Dorsolateral prefrontal cortex (tissue), 120 donors: ENCODE measurements at regions of chrX and their contacts with region 1.

Region 1: DNA sequence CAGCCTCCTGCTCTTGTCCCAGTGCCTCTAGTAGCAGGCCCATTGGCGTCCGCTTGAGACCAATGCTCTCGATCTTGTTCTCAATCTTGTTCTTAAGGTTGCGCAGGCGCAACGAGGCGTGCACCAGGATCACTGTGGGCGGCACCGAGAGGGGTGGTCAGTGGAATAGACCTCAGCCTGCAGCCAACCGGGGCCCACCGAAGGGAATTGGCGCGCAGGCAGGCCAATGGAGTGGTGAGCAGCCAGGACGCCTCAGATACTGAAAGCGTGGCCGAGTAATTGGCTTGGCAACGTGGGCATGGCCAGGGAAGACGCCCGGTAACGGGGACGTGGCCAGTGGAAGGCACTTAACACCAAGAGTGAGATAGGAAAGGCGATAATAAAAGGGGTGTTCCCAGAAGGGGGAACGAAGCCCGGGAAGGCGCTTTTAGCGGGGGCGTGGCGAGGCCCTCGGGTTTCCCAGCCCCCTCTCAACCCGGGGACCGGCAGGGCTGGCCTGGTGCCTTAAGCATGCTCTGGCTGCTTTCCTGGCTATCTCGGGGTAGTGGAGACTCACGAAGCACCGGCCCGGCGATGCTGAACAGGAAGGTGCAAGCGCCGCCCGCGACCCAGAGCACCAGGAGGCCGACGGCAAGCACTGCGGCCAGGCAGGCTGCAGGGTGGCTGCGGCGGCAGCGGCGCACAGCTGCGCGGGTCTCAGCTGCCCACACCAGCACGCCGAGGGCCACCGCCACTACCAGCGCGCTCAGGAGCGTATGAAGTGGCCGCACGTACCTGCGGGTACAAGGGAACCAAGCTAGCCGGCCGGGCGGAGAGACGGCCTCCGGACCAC is 1.7 kb downstream of the PRAF2 start:
- DNase-seq: peak in 9 of 10 donors; percentile 51 to 87 (median 76)
- H3K4me3 ChIP-seq: peak overlapping the region; percentile 0 to 82 (median 70)
- H3K27ac ChIP-seq: peak overlapping the region in 23 of 59 donors; percentile 3 to 89 (median 29)
- H3K27me3 ChIP-seq: peaks cover 0 to 41% (median 0%) of the 10 kb centered on the region in 45 donors
- CTCF ChIP-seq: no peak

Region 2: GRCh38 chrX:48989483-48989882 is 82.6 kb before region 1 on chrX:
- intact Hi-C with region 1: no loop called
- DNase-seq: no peak
- H3K4me3 ChIP-seq: no peak overlapping the region
- H3K27ac ChIP-seq: no peak overlapping the region
- H3K27me3 ChIP-seq: peaks cover 0 to 32% (median 0%) of the 10 kb centered on the region in 45 donors
- CTCF ChIP-seq: no peak

Region 3: DNA sequence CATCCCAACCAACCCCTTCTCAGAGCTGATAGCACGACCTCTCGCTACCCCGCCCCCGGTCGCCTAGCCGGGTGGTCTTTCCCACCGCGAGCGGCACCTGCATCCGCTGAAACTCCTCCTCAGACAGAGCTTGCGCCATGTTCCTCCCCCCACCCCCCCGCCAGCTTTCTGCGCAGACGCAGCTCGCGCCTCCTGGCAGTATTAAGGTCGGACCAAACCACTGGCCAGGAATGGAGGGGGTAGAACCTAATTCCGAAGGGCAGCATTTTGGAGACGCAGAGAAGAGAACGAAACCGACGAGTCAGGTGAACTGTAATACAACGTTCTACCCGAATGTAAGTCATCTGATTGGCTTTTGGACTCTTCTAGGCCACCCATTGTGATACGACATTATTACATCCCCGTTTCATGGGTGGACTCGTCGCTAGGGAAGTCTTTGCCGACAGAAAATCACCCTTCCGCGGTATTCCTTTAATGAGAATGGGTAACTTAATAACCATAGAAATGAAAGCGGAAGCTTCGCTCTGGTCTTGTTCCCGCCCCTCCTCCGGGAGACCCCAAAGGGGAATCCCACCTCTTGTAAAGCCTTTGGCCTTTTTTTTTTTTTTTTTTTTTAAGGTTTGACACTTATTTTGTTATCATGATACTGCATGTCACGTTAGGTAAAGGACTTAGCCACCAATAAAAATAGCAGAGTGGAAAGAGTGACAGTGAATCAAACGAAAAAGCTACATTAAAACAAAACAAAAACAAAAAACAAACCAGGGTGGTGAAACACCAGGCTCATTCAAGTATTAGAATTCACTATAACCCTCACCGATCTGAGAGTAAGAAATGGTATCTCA is 69.8 kb before region 1 on chrX and contains the start of gene GRIPAP1:
- intact Hi-C with region 1: loop called in 1 of 2 experiments (anchors 2 kb)
- DNase-seq: peak in 9 of 10 donors; percentile 24 to 71 (median 50)
- H3K4me3 ChIP-seq: peak within 1 kb of the TSS; percentile 41 to 86 (median 71)
- H3K27ac ChIP-seq: peak within 1 kb of the TSS in 58 of 59 donors; percentile 12 to 97 (median 88)
- H3K27me3 ChIP-seq: peaks cover 0 to 31% (median 0%) of the 10 kb centered on the region in 45 donors
- CTCF ChIP-seq: no peak
- total RNA-seq, gene GRIPAP1: 95.2 to 201 (median 126) TPM

Region 4: DNA sequence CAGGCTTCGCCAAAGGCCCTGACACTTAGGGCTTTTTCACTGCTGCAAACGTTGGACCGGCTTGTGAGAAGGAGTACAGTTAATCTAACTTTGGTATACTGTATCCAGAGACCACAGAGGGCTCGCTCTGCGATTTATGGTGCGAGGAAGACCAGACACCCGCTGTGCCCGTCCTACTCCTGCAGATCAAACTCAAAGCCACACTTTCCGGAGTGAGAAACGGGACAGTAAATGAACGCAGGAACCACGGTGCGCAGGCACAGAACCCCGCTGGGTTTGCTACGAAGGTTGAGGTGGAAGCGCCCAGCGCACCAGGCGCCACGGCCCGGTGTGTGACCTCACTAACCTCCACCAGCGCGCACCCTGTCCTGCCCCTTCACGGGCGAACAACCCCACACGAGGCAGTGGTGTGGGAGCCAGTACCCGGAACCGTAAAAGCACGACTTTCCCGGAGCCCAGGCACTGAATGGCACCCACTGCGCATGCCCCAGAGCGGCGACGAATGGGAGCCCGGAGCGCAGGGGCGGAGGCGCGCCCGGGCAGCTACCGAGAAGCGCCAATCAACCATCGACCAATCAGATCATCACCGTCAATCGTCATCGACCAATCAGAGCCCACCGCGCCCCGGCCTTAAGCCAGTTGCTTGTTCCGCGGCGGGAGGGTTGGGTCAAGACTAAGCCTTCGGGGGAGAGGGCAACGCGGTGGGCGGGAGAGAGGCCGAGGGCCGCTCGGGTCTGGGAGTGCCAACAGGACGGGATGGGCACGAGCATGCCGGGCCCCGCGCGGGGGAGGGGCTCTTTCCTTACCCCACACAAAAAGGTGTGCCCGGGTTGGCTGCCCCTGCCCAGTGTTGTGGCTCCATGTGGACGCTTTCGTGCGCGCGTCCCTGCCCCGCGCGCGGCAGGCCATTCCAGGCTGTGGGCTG is 28.9 kb after region 1 on chrX:
- intact Hi-C with region 1: no loop called
- DNase-seq: peak; percentile 83 to 93 (median 90)
- H3K4me3 ChIP-seq: peak overlapping the region; percentile 41 to 80 (median 66)
- H3K27ac ChIP-seq: peak overlapping the region in 49 of 59 donors; percentile 22 to 87 (median 66)
- H3K27me3 ChIP-seq: peaks cover 0 to 30% (median 0%) of the 10 kb centered on the region in 45 donors
- CTCF ChIP-seq: peak in 5 of 56 donors; percentile 5 to 21 (median 10)